Panc1 (cell line): ENCODE measurements at regions of chr12 and their contacts with region 1.

Region 1: GRCh38 chr12:47651368-47652254 is 54.2 kb downstream of the RPAP3 start:
- DNase-seq: peak; percentile 35
- ATAC-seq: peak; percentile 94
- H3K4me3 ChIP-seq: no peak overlapping the region
- H3K27ac ChIP-seq: no peak overlapping the region
- H3K4me1 ChIP-seq: no peaks in the 10 kb centered on the region
- H3K27me3 ChIP-seq: no peaks in the 10 kb centered on the region
- CTCF ChIP-seq: peak; percentile 81

Region 2: DNA sequence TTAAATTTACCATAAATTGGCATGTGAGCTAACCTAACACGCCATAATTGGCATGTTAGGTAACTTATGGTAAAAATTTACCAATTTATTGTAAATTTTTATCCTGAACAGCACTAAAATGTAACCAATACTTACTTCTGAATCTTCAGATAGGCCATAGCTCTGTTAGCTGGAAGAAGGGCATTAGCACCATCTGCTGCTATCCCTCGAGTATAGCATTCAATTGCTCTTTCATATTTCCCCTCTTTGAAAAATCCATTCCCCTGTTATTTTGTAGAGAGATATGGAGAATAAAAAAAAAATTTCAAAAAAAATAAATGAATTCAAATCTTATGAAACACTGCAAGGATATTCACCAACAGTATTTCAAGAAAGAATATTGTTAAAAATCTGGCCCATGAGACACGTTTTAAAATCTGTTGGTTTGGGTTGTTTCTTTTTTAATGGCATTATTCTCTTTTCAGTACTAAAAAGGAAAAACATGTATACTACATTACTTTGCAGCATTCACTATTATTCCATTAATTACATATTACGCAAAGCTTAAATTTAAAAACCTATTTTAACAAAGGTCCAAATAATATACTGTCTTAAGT is 35.1 kb after region 1 on chr12:
- CTCF ChIA-PET with region 1: interaction called, 7 read pairs
- POLR2A ChIA-PET with region 1: interaction called, 4 read pairs
- in situ Hi-C with region 1: no loop called
- intact Hi-C with region 1: loop called (anchors 5 kb)
- DNase-seq: no peak
- ATAC-seq: no peak; the same call in 1 of the 2 replicates
- H3K4me3 ChIP-seq: no peak overlapping the region
- H3K27ac ChIP-seq: no peak overlapping the region
- H3K4me1 ChIP-seq: no peaks in the 10 kb centered on the region
- H3K27me3 ChIP-seq: no peaks in the 10 kb centered on the region
- CTCF ChIP-seq: peak; percentile 74; the same call in 1 of the 2 replicates